PC-3 (cell line): ENCODE measurements at regions of chr11 and their contacts with region 1.

Region 1: GRCh38 chr11:27485930-27486773 is 13.6 kb upstream of the LGR4 start:
- DNase-seq: peak; percentile 85
- ATAC-seq: peak; percentile 76
- H3K4me3 ChIP-seq: no peak overlapping the region
- H3K27ac ChIP-seq: no peak overlapping the region
- H3K4me1 ChIP-seq: no peaks in the 10 kb centered on the region
- H3K27me3 ChIP-seq: no peaks in the 10 kb centered on the region
- CTCF ChIP-seq: peak; percentile 88

Region 2: DNA sequence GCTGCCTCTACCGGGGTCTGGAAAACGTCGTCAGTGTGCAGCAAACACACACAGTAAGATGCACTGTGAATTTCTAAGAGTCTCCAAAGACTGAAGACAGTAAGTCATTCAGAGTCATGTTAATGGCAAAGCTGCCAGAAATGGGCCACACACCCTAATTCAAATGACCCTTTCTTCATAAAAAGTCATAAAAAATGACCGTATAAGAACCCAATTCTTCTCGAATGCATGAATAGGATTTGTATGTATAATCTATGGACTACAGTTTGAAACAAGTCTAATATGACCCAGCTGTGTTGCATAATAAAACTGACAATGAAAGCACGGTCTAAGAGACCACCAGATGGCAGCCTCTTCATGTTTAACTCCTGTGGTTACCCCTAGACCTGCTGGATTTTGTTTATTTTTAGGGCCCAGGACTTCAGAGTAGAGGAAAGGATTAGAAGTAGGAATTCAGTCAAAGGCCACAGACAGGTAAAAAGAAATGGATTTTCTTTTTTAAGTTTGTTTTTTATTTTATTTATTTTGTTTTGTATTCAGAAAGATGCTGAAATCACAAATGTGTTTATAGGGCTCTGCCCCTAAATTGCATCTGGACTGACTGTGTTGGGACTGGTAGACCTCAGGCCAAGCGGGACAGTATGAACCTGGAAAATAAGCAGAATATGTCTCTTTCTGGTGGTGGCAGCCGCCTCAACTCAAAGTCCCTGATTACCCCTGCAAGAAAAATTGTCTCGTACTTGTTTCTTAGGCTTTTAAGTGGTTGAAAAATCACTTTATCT is 732.2 kb before region 1 on chr11:
- CTCF ChIA-PET with region 1: no interaction called
- POLR2A ChIA-PET with region 1: no interaction called
- intact Hi-C with region 1: loop called (anchors 5 kb)
- DNase-seq: peak; percentile 53
- ATAC-seq: peak; percentile 74
- H3K4me3 ChIP-seq: no peak overlapping the region
- H3K27ac ChIP-seq: no peak overlapping the region
- H3K4me1 ChIP-seq: no peaks in the 10 kb centered on the region
- H3K27me3 ChIP-seq: no peaks in the 10 kb centered on the region
- CTCF ChIP-seq: peak; percentile 73

Region 3: DNA sequence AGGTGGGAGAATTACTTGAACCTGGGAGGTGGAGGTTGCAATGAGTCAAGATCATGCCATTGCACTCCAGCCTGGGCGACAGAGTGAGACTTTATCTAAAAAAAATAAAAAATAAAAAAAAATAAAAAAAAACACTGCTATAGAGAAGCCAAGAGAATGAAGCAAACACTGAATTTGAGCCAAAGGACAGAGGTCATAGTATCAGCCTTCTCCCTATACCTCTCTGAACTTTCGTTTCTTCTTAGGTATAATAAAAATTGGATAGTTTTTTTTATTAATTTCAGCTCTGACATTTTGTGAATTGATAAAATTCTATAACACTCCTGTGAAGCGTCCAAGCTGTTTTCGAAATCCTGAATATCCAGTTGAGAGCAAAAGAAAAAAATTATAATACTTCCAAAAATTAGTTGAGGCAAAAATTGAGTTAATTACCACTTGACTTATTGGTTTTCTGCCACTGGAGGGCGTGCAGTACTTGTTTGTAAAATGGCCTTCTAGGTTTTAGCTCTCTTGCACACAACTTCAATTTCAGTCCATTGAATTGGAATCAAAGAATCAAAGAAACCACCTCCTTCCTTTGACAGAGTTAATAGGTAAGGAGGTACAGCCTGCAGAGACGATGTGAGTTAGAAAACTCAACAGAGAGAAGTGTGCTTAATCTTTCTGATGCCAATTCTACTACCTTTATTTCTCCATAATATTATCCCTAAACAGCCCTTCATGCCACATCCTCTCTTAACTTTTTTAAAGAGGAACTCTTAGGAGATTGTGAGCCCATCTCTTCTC is 302.3 kb before region 1 on chr11:
- CTCF ChIA-PET with region 1: interaction called, 20 read pairs
- POLR2A ChIA-PET with region 1: no interaction called
- intact Hi-C with region 1: loop called (anchors 1 kb)
- DNase-seq: peak; percentile 71
- ATAC-seq: peak; percentile 33; the same call in 1 of the 2 replicates
- H3K4me3 ChIP-seq: no peak overlapping the region
- H3K27ac ChIP-seq: no peak overlapping the region
- H3K4me1 ChIP-seq: no peaks in the 10 kb centered on the region
- H3K27me3 ChIP-seq: no peaks in the 10 kb centered on the region
- CTCF ChIP-seq: peak; percentile 84

Region 4: GRCh38 chr11:27209562-27210005 is 276.6 kb before region 1 on chr11:
- CTCF ChIA-PET with region 1: no interaction called
- POLR2A ChIA-PET with region 1: no interaction called
- intact Hi-C with region 1: loop called (anchors 5 kb)
- DNase-seq: peak; percentile 96
- ATAC-seq: peak; percentile 82
- H3K4me3 ChIP-seq: no peak overlapping the region
- H3K27ac ChIP-seq: peak overlapping the region; percentile 65
- H3K4me1 ChIP-seq: peaks cover 46% of the 10 kb centered on the region
- H3K27me3 ChIP-seq: no peaks in the 10 kb centered on the region
- CTCF ChIP-seq: no peak

Region 5: GRCh38 chr11:27532652-27533325 is 46.6 kb after region 1 on chr11:
- CTCF ChIA-PET with region 1: no interaction called
- POLR2A ChIA-PET with region 1: no interaction called
- intact Hi-C with region 1: no loop called
- DNase-seq: no peak
- ATAC-seq: no peak
- H3K4me3 ChIP-seq: no peak overlapping the region
- H3K27ac ChIP-seq: no peak overlapping the region
- H3K4me1 ChIP-seq: no peaks in the 10 kb centered on the region
- H3K27me3 ChIP-seq: no peaks in the 10 kb centered on the region
- CTCF ChIP-seq: no peak